IMR-90 (cell line): ENCODE measurements at regions of chr5 and their contacts with region 1.

Region 1: DNA sequence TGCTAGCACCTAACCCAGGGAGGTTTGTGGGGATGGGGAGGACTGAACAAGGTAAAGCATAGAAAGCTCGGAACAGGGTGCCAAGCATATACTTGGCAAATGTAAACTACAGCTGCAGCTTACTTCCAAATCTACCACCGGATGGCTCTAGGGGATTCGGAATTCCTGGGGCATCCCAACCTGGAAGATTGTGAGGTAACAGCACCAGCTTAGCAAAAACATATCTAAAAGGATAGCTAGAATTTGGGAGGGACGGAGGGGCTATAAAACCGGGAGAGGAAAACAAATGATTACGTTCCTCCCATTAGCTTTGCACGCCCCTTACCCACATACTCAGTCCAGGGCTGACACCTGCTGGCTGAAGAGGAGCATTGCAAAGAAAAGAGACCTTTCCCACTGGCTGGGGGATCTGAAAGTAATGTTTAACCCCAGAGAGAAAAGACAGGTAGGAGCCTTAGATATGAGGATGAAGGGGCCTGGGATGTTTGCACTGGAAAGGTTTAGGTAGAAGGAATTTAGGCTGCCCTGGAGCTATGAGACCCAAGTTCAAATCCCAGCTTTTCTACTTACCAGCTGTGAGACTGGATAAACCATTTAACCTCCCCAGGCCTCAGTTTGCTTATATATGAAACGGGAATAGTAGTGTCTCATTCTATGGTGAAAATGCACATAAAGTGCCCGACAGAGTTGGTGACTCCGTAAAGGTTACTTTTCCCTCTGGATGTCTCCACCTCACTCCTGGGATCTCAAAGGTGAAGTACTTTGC is 73.6 kb downstream of the FAM114A2 start:
- DNase-seq: peak; percentile 41
- ATAC-seq: peak; percentile 97
- H3K4me3 ChIP-seq: no peak overlapping the region
- H3K27ac ChIP-seq: no peak overlapping the region
- H3K4me1 ChIP-seq: peaks cover 8% of the 10 kb centered on the region
- H3K27me3 ChIP-seq: no peaks in the 10 kb centered on the region; the same call in 1 of the 2 replicates
- CTCF ChIP-seq: peak; percentile 95
- POLR2A ChIP-seq: peak; percentile 57
- RAD21 ChIP-seq: peak; percentile 99

Region 2: DNA sequence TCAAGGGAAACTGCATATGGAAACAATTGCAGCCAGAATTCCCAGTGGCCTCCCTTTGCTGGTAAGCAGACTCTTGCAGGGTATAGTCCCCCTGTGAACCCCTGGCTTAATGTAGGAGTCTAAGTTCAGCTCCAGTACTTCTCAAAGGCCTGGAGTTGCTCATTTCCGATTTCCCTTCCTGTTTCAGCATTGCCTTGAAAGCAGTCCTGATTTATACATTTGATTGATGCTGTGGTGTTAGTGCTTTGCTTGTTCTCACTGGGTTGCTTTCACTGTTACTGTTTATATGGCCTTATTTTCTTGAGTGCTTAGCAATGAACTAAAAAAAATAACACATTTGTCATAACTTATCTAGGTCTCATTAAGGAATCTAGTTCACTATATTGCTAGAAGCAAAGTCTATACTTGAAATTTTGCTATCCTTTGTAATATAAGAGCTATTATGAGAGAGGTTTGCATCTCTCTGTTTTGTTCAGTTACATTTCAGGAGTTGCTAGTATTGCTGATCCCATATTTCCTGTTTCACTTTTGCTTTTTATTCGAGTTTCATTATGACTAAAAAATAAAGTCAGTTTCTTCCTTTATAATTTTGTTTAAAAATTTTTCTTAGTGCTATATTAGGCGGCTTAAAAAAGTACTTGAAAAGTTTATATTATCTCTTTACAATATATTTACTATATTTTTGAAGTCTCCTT is 1437.6 kb before region 1 on chr5:
- CTCF ChIA-PET with region 1: interaction called, 19 read pairs
- POLR2A ChIA-PET with region 1: no interaction called
- dilution Hi-C with region 1: no loop called
- in situ Hi-C with region 1: loop called (anchors 5 kb)
- intact Hi-C with region 1: loop called (anchors 1 kb)
- DNase-seq: no peak
- ATAC-seq: no peak
- H3K4me3 ChIP-seq: no peak overlapping the region
- H3K27ac ChIP-seq: no peak overlapping the region
- H3K4me1 ChIP-seq: no peaks in the 10 kb centered on the region
- H3K27me3 ChIP-seq: no peaks in the 10 kb centered on the region
- CTCF ChIP-seq: no peak
- POLR2A ChIP-seq: no peak
- RAD21 ChIP-seq: no peak

Region 3: GRCh38 chr5:153480401-153480800 is 484.7 kb before region 1 on chr5:
- CTCF ChIA-PET with region 1: no interaction called
- POLR2A ChIA-PET with region 1: no interaction called
- dilution Hi-C with region 1: no loop called
- in situ Hi-C with region 1: loop called (anchors 10 kb)
- intact Hi-C with region 1: no loop called
- DNase-seq: peak; percentile 52
- ATAC-seq: no peak; the same call in 1 of the 2 replicates
- H3K4me3 ChIP-seq: no peak overlapping the region
- H3K27ac ChIP-seq: no peak overlapping the region
- H3K4me1 ChIP-seq: no peaks in the 10 kb centered on the region
- H3K27me3 ChIP-seq: no peaks in the 10 kb centered on the region
- CTCF ChIP-seq: no peak
- POLR2A ChIP-seq: no peak
- RAD21 ChIP-seq: no peak

Region 4: DNA sequence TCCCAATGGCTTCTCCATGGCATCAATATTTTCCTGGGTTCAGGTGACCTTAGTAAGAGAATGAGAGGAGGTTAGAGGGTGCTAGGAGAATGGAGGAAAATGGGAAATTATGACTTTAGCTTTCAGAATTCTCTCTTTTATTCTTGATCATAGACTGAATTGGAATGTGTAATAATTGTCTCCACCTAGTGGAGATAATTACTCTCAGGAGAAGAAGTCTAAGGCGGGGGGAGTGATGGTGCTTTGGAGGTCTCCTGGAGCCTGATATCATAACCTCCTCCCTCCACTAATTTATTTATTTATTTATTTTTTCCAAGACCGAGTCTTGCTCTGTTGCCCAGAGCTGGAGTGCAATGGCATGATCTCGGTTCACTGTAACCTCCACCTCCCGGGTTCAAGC is 253.3 kb before region 1 on chr5:
- CTCF ChIA-PET with region 1: no interaction called
- POLR2A ChIA-PET with region 1: no interaction called
- dilution Hi-C with region 1: no loop called
- in situ Hi-C with region 1: no loop called
- intact Hi-C with region 1: loop called (anchors 10 kb)
- DNase-seq: peak; percentile 6
- ATAC-seq: 0 out of 2 replicates have a peak, but pooled peaks have one; percentile 27
- H3K4me3 ChIP-seq: no peak overlapping the region
- H3K27ac ChIP-seq: no peak overlapping the region
- H3K4me1 ChIP-seq: no peaks in the 10 kb centered on the region
- H3K27me3 ChIP-seq: no peaks in the 10 kb centered on the region
- CTCF ChIP-seq: peak; percentile 48
- POLR2A ChIP-seq: no peak
- RAD21 ChIP-seq: peak; percentile 54

Region 5: GRCh38 chr5:154633138-154633537 is 668.1 kb after region 1 on chr5:
- CTCF ChIA-PET with region 1: no interaction called
- POLR2A ChIA-PET with region 1: no interaction called
- dilution Hi-C with region 1: no loop called
- in situ Hi-C with region 1: no loop called
- intact Hi-C with region 1: no loop called
- DNase-seq: no peak
- ATAC-seq: no peak
- H3K4me3 ChIP-seq: no peak overlapping the region
- H3K27ac ChIP-seq: no peak overlapping the region
- H3K4me1 ChIP-seq: no peaks in the 10 kb centered on the region
- H3K27me3 ChIP-seq: peaks cover 14% of the 10 kb centered on the region
- CTCF ChIP-seq: no peak
- POLR2A ChIP-seq: no peak
- RAD21 ChIP-seq: no peak